ENCODE measurements at regions of chr20 and their contacts with region 1.

Region 1: DNA sequence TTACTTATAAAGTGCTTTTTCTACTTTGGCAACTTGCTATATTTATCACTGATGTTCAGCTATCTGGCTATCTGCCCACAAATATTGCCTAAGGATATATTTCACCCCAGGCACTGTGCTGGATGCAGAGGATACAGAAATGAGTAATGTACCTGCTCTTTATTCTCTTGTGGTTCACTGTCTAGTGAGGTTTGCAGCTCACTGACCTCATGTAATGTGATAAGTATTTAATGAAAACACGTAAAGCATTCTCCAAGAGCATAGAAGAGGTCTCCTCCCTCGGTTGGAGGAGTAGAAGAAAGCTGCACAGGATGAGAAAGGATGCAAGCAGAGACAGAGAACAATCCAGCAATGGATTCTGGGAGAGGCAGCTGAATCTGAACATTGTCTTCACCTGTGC is 610.7 kb downstream of the CBLN4 start:
- DNase-seq: no peak
- ATAC-seq: no peak

Region 2: GRCh38 chr20:55057779-55058415 is 336.7 kb before region 1 on chr20:
- intact Hi-C with region 1: loop called (anchors 10 kb)
- DNase-seq: no peak
- ATAC-seq: no peak

Region 3: GRCh38 chr20:55449091-55449794 is 54.7 kb after region 1 on chr20:
- intact Hi-C with region 1: no loop called
- DNase-seq: no peak
- ATAC-seq: no peak